Cardiac septum (tissue), 1 donor: ENCODE measurements at regions of chr5 and their contacts with region 1.

Region 1: DNA sequence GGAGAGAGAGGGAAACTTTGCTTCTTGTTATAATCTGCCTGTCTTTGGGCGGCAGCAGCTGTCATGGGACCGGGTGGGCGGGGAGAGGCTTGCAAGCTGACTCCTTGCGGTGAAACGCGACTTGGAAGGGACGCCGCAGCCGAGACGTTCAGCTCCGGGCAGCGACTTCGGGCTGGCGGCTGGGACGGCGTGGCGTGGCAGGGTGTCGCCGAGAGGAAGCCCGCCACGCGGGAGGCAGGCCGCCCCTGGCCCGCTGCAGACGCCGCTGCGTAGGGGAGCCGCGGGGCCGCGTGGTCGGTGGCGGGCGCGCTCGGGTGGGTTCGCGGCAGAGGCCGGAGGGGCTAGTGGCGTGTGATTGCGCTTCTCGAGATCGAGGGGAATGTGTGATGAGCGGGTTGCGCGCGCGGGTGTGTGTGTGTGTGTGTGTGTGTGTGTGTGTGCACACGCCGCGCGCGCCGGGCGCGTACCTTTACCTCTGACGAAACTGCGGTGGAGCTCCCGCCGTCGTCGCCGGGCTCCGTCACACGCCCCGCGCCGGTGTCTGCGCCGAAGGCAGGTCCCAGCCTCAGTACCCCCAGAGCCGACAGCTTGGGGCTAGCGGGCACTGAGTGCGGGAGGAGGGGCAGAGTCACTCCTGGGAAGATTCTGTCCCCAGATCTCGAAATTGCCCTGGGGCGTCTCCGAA is 1.7 kb downstream of the PPARGC1B start:
- DNase-seq: peak; percentile 76

Region 2: DNA sequence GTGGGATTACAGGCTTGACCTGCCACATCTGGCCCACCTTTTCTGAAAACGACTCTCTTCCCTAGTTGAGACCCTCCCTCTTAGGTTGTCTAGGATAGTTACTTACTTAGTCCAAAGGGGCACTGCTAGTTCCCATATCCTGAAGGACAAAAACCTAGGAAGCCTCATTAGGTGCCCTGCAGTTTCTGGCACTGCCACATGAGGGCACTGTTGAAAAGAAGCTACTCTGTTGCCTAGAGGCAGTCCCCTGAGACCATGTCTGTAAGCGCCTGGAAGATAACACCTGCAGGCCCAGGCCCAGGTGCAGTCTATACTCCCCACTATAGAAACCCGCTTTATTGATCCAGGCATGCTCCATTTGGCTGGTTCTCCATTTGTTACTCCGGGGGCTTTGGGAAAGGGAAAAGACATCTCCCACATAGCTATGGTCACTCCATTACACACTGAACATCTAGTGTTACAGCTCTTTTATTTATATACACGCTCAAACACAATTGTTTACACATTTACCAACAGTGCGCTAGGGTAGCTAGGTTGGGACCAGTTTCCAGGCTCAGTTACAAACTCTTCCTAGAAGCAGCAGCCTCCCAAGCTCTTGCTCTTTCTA is 75.1 kb before region 1 on chr5:
- intact Hi-C with region 1: loop called (anchors 1 kb)
- DNase-seq: peak; percentile 77

Region 3: DNA sequence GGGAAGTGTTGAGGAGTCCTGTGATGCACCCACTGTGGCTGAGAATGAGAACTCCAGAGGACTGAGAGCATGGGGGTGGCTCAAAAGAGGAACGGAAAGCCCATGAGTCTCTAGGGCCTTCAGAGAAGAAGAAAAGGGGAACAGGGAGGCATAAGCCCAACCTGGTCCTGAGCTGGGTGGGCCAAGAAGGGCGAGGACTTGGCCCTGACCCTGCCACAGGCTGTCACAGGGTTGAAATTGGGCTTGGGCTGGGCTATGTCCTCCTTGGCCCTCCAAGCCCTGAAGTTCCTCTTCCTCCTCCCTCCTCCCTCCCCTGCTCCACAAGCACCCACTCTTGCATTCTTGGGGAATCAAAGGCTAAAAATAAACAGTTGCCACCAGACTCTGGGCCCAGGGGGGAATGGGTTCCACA is 51.0 kb before region 1 on chr5:
- intact Hi-C with region 1: loop called (anchors 2 kb)
- DNase-seq: no peak

Region 4: GRCh38 chr5:149697001-149697400 is 34.8 kb before region 1 on chr5:
- intact Hi-C with region 1: no loop called
- DNase-seq: no peak

Region 5: GRCh38 chr5:149764086-149764485 is 32.3 kb after region 1 on chr5:
- intact Hi-C with region 1: no loop called
- DNase-seq: peak; percentile 54

Region 6: DNA sequence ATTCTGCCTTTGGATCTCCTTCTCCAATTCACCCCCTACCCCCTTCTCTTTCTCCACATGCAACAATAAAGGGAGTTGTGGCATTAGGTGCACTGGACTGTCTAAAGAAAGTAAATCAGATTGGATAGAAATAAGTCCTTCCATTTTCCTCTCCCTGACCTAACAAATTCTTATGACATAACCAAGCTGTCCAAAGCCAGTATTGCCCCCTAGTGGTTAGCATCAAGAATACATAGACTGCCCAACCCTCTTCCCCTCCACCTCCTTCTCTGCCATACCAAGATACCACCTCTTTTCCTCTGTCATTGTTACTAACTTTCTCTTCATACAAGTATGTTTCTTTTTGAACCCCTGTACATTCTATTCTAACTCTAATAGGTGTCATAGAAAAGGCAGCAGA is 44.0 kb after region 1 on chr5:
- intact Hi-C with region 1: loop called (anchors 5 kb)
- DNase-seq: no peak

Region 7: DNA sequence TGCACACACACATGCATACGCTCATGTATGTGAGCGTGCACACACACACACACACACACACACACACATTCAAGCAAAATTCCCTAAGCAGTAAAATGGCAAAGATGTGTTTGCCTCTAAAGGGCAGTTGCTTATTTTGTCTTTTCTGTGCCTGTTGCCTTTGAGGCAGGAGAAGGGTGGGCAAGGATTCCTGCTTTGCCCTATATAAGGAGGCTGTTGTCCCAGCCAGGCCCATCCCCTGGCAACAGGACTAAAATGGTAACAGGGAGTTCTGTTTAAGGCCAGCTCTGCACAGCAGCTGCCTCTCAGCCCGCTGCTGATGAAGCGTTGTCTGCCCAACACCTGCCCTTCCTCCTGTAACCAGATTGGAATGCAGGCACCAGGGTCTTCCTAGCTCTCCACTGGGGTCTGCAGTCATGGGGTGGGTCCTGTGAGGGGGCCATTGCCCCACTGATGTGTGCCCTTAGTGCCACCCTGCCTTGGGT is 62.7 kb after region 1 on chr5:
- intact Hi-C with region 1: no loop called
- DNase-seq: no peak

Region 8: GRCh38 chr5:149804478-149805450 is 73.0 kb after region 1 on chr5:
- intact Hi-C with region 1: loop called (anchors 5 kb)
- DNase-seq: no peak